ENCODE measurements at regions of chrX and their contacts with region 1.

Region 1: DNA sequence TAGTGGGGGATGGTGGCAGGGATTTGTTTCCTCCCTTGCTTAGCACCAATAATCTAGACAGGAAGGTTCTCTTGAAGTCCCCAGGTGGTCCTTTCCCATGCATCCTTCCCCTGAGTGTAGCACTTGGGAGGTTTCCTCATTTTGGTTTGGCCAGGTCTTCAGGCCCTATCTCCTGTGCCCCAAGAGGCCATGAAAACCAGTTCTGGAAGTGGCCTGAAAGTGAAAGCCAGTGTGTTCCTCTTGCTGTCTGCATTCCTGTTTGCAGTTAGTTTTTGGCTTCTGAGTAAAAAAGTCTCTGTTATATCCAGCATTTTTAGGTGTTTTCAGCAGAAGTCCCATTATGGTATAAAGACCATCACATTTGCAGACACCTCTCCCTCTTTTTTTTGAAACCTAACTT is 59.5 kb downstream of the MTM1 start:
- DNase-seq: no peak
- H3K4me3 ChIP-seq: no peak overlapping the region
- H3K27ac ChIP-seq: no peak overlapping the region
- H3K4me1 ChIP-seq: no peaks in the 10 kb centered on the region
- H3K27me3 ChIP-seq: no peaks in the 10 kb centered on the region
- CTCF ChIP-seq: no peak

Region 2: GRCh38 chrX:150616863-150617198 is 11.1 kb before region 1 on chrX:
- CTCF ChIA-PET with region 1: no interaction called
- POLR2A ChIA-PET with region 1: interaction called, 11 read pairs
- intact Hi-C with region 1: no loop called
- DNase-seq: no peak
- H3K4me3 ChIP-seq: no peak overlapping the region
- H3K27ac ChIP-seq: no peak overlapping the region
- H3K4me1 ChIP-seq: no peaks in the 10 kb centered on the region
- H3K27me3 ChIP-seq: no peaks in the 10 kb centered on the region
- CTCF ChIP-seq: no peak

Region 3: GRCh38 chrX:150873616-150874015 is 245.7 kb after region 1 on chrX:
- CTCF ChIA-PET with region 1: no interaction called
- POLR2A ChIA-PET with region 1: no interaction called
- intact Hi-C with region 1: no loop called
- DNase-seq: no peak
- H3K4me3 ChIP-seq: no peak overlapping the region
- H3K27ac ChIP-seq: no peak overlapping the region
- H3K4me1 ChIP-seq: no peaks in the 10 kb centered on the region
- H3K27me3 ChIP-seq: no peaks in the 10 kb centered on the region
- CTCF ChIP-seq: no peak